Esophagus squamous epithelium (tissue), 5 donors: ENCODE measurements at regions of chr11 and their contacts with region 1.

Region 1: GRCh38 chr11:6377902-6378639 is 12.2 kb upstream of the SMPD1 start:
- DNase-seq: no peak
- H3K4me3 ChIP-seq: no peak overlapping the region
- H3K27ac ChIP-seq: no peak overlapping the region
- H3K4me1 ChIP-seq: no peaks in the 10 kb centered on the region
- H3K27me3 ChIP-seq: no peaks in the 10 kb centered on the region
- CTCF ChIP-seq: no peak
- POLR2A ChIP-seq: no peak

Region 2: DNA sequence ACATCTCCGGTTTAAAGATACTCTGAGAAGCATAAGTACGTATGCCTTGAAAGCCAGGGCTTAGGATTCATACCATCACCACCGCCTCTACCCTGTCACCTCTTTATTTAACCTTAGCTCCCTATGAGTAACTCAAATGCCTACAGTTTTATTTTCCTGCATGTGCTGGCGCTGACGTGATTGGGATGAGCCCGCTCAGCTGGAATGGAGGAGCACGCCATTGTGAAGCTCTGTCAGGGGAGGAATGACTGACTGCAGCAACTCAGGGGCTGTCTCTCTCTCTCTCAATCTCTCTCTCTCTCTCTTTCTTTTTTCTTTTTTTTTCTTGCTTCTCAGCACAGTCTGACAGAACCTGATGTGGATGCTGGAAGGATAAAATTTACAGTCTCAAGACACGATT is 70.2 kb before region 1 on chr11:
- intact Hi-C with region 1: no loop called
- DNase-seq: no peak
- H3K4me3 ChIP-seq: no peak overlapping the region
- H3K27ac ChIP-seq: no peak overlapping the region
- H3K4me1 ChIP-seq: no peaks in the 10 kb centered on the region
- H3K27me3 ChIP-seq: peaks cover 0 to 23% (median 0%) of the 10 kb centered on the region in 4 donors
- CTCF ChIP-seq: no peak
- POLR2A ChIP-seq: no peak

Region 3: GRCh38 chr11:6427516-6427915 is 49.4 kb after region 1 on chr11:
- intact Hi-C with region 1: no loop called
- DNase-seq: no peak
- H3K4me3 ChIP-seq: no peak overlapping the region
- H3K27ac ChIP-seq: no peak overlapping the region
- H3K4me1 ChIP-seq: no peaks in the 10 kb centered on the region
- H3K27me3 ChIP-seq: peaks cover 0 to 2% (median 0%) of the 10 kb centered on the region in 4 donors
- CTCF ChIP-seq: no peak
- POLR2A ChIP-seq: no peak

Region 4: GRCh38 chr11:6443269-6444003 is 65.4 kb after region 1 on chr11:
- intact Hi-C with region 1: loop called (anchors 5 kb)
- DNase-seq: no peak
- H3K4me3 ChIP-seq: no peak overlapping the region
- H3K27ac ChIP-seq: no peak overlapping the region
- H3K4me1 ChIP-seq: peaks cover 0 to 3% (median 0%) of the 10 kb centered on the region in 3 donors
- H3K27me3 ChIP-seq: no peaks in the 10 kb centered on the region
- CTCF ChIP-seq: peak; percentile 64 to 80 (median 73)
- POLR2A ChIP-seq: no peak

Region 5: DNA sequence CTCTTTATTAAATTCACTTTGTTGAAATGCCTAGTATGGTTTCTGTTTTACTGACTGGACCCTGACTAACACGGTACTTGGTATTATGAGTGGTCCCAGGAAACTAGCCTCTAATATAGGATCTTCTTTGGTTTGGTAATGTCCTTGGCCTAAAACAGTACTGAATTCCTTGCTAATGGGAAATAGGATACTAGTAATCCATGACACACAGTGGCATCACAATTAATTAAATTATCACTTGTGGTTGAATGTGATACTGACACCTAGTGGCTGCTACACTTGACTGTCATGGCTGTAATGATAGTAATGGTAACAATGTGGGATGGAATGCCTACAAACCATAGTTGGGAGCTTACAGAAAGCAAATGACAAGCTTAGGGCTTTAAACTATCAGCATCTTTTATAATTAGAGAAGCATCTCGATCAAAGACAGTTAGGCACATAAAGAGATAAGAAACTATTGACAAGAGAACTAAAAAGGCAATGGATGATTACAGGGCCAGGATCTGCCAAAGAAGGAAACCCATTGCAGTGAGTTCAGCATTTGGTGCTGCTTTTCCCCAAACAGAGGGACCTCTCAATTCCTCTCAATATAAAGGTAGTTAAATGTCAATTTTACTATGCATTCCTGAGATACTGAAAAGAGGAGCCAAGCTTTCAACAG is 127.6 kb after region 1 on chr11:
- intact Hi-C with region 1: loop called (anchors 10 kb)
- DNase-seq: no peak
- H3K4me3 ChIP-seq: no peak overlapping the region
- H3K27ac ChIP-seq: no peak overlapping the region
- H3K4me1 ChIP-seq: peaks cover 0 to 5% (median 0%) of the 10 kb centered on the region in 3 donors
- H3K27me3 ChIP-seq: no peaks in the 10 kb centered on the region
- CTCF ChIP-seq: peak; percentile 48 to 81 (median 64)
- POLR2A ChIP-seq: no peak